ENCODE measurements at regions of chr14 and their contacts with region 1.

Region 1: GRCh38 chr14:98244162-98244948 is 1027.6 kb downstream of the BCL11B start:
- DNase-seq: no peak
- ATAC-seq: no peak
- H3K4me3 ChIP-seq: no peak overlapping the region
- H3K4me3 Mint-ChIP-seq: no peak overlapping the region
- H3K27ac ChIP-seq: no peak overlapping the region
- H3K27ac Mint-ChIP-seq: no peak overlapping the region
- H3K4me1 ChIP-seq: no peaks in the 10 kb centered on the region
- H3K4me1 Mint-ChIP-seq: peaks cover 12 to 25% (median 12%) of the 10 kb centered on the region in 3 donors
- H3K27me3 ChIP-seq: no peaks in the 10 kb centered on the region
- H3K27me3 Mint-ChIP-seq: no peaks in the 10 kb centered on the region

Region 2: GRCh38 chr14:96911499-96912149 is 1332.7 kb before region 1 on chr14:
- CTCF ChIA-PET with region 1: no interaction called
- POLR2A ChIA-PET with region 1: interaction called in 1 of 2 experiments, 13 read pairs
- DNase-seq: no peak
- ATAC-seq: peak in 3 of 4 experiments; percentile 34 to 46 (median 41)
- H3K4me3 ChIP-seq: no peak overlapping the region
- H3K4me3 Mint-ChIP-seq: peak overlapping the region in 1 of 3 donors; percentile 19
- H3K27ac ChIP-seq: no peak overlapping the region
- H3K27ac Mint-ChIP-seq: peak overlapping the region in 1 of 2 donors; percentile 58
- H3K4me1 ChIP-seq: peaks cover 2 to 12% of the 10 kb centered on the region in 2 experiments
- H3K4me1 Mint-ChIP-seq: peaks cover 17 to 29% (median 19%) of the 10 kb centered on the region in 3 donors
- H3K27me3 ChIP-seq: no peaks in the 10 kb centered on the region
- H3K27me3 Mint-ChIP-seq: no peaks in the 10 kb centered on the region

Region 3: GRCh38 chr14:98069712-98070171 is 174.6 kb before region 1 on chr14:
- CTCF ChIA-PET with region 1: no interaction called
- POLR2A ChIA-PET with region 1: no interaction called
- DNase-seq: no peak
- ATAC-seq: no peak
- H3K4me3 ChIP-seq: no peak overlapping the region
- H3K4me3 Mint-ChIP-seq: no peak overlapping the region
- H3K27ac ChIP-seq: no peak overlapping the region
- H3K27ac Mint-ChIP-seq: no peak overlapping the region
- H3K4me1 ChIP-seq: no peaks in the 10 kb centered on the region
- H3K4me1 Mint-ChIP-seq: peaks cover 2 to 5% (median 3%) of the 10 kb centered on the region in 3 donors
- H3K27me3 ChIP-seq: no peaks in the 10 kb centered on the region
- H3K27me3 Mint-ChIP-seq: no peaks in the 10 kb centered on the region

Measured in T-cell (primary cell).